CD4-positive, alpha-beta memory T cell (primary cell): ENCODE measurements at regions of chr22 and their contacts with region 1.

Region 1: GRCh38 chr22:40024201-40025061 is 29.7 kb downstream of the FAM83F start:
- DNase-seq: peak in 4 of 5 donors; percentile 41 to 48 (median 47)
- H3K4me3 ChIP-seq: no peak overlapping the region
- H3K4me3 Mint-ChIP-seq: no peak overlapping the region
- H3K27ac ChIP-seq: no peak overlapping the region
- H3K27ac Mint-ChIP-seq: no peak overlapping the region
- H3K4me1 ChIP-seq: no peaks in the 10 kb centered on the region
- H3K4me1 Mint-ChIP-seq: peaks cover 0 to 2% (median 0%) of the 10 kb centered on the region in 4 donors
- H3K27me3 ChIP-seq: no peaks in the 10 kb centered on the region
- H3K27me3 Mint-ChIP-seq: peaks cover 0 to 1% of the 10 kb centered on the region in 2 donors

Region 2: GRCh38 chr22:39543095-39543494 is 481.3 kb before region 1 on chr22:
- CTCF ChIA-PET with region 1: interaction called, 179 read pairs
- POLR2A ChIA-PET with region 1: no interaction called
- intact Hi-C with region 1: no loop called
- DNase-seq: no peak
- H3K4me3 ChIP-seq: no peak overlapping the region
- H3K4me3 Mint-ChIP-seq: no peak overlapping the region
- H3K27ac ChIP-seq: no peak overlapping the region
- H3K27ac Mint-ChIP-seq: no peak overlapping the region
- H3K4me1 ChIP-seq: peaks cover 7% of the 10 kb centered on the region
- H3K4me1 Mint-ChIP-seq: peaks cover 8 to 18% (median 15%) of the 10 kb centered on the region in 4 donors
- H3K27me3 ChIP-seq: peaks cover 3% of the 10 kb centered on the region
- H3K27me3 Mint-ChIP-seq: peaks cover 18 to 25% of the 10 kb centered on the region in 2 donors

Region 3: DNA sequence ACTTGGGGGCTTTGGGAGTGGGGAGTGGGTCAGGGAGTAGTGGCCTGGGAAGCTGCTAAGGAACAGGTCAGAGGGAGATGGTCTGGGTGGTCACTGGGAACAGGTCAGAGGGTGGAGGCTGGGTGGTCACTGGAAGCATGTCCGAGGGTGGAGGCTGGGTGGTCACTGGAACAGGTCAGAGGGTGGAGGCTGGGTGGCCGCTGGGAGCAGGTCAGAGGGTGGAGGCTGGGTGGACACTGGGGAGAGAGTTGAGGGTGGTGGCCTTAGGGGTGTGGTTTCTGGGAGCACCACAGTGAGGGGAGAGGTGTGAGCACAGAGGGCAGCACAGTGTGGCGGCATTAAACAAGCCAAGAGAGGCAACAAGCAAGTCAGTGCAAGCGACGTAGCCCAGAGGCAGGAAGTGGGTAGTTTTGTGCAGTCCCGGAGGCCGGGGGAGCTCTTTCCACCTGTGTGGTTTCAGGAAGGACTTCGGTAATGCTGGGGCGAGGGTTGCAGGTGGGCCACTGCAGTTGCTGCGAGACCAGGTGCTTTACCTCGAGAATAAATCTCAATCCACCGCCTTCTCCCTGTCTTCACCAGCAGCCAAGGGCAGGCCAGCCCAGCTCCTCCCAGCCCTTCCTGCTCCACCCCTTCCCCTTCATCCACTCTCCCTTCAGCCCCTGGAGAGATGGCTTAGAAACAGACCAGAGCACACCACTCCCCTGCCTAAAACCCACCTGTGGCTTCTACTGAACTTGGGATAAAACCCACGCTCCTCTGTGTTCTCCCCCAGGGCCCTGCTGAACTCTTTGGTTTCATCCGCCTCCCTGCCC is 457.1 kb before region 1 on chr22:
- CTCF ChIA-PET with region 1: interaction called, 11 read pairs
- POLR2A ChIA-PET with region 1: interaction called, 3 read pairs
- intact Hi-C with region 1: no loop called
- DNase-seq: peak; percentile 43 to 58 (median 52)
- H3K4me3 ChIP-seq: peak overlapping the region in 1 of 2 donors; percentile 3
- H3K4me3 Mint-ChIP-seq: peak overlapping the region; percentile 47 to 68 (median 50)
- H3K27ac ChIP-seq: no peak overlapping the region
- H3K27ac Mint-ChIP-seq: peak overlapping the region; percentile 54 to 91 (median 83)
- H3K4me1 ChIP-seq: peaks cover 14% of the 10 kb centered on the region
- H3K4me1 Mint-ChIP-seq: peaks cover 16 to 23% (median 18%) of the 10 kb centered on the region in 4 donors
- H3K27me3 ChIP-seq: no peaks in the 10 kb centered on the region
- H3K27me3 Mint-ChIP-seq: no peaks in the 10 kb centered on the region

Region 4: GRCh38 chr22:39900306-39901227 is 123.9 kb before region 1 on chr22 and contains the start of gene GRAP2:
- CTCF ChIA-PET with region 1: interaction called, 31 read pairs
- POLR2A ChIA-PET with region 1: no interaction called
- intact Hi-C with region 1: loop called (anchors 1 kb)
- DNase-seq: peak; percentile 84 to 91 (median 86)
- H3K4me3 ChIP-seq: peak within 1 kb of the TSS; percentile 57 to 72
- H3K4me3 Mint-ChIP-seq: peak within 1 kb of the TSS; percentile 91 to 100 (median 97)
- H3K27ac ChIP-seq: peak within 1 kb of the TSS; percentile 75
- H3K27ac Mint-ChIP-seq: peak within 1 kb of the TSS in 6 of 7 donors; percentile 95 to 98 (median 98)
- H3K4me1 ChIP-seq: peaks cover 29% of the 10 kb centered on the region
- H3K4me1 Mint-ChIP-seq: peaks cover 9 to 31% (median 17%) of the 10 kb centered on the region in 4 donors
- H3K27me3 ChIP-seq: no peaks in the 10 kb centered on the region
- H3K27me3 Mint-ChIP-seq: no peaks in the 10 kb centered on the region
- total RNA-seq, gene GRAP2: 134 to 140 TPM

Region 5: DNA sequence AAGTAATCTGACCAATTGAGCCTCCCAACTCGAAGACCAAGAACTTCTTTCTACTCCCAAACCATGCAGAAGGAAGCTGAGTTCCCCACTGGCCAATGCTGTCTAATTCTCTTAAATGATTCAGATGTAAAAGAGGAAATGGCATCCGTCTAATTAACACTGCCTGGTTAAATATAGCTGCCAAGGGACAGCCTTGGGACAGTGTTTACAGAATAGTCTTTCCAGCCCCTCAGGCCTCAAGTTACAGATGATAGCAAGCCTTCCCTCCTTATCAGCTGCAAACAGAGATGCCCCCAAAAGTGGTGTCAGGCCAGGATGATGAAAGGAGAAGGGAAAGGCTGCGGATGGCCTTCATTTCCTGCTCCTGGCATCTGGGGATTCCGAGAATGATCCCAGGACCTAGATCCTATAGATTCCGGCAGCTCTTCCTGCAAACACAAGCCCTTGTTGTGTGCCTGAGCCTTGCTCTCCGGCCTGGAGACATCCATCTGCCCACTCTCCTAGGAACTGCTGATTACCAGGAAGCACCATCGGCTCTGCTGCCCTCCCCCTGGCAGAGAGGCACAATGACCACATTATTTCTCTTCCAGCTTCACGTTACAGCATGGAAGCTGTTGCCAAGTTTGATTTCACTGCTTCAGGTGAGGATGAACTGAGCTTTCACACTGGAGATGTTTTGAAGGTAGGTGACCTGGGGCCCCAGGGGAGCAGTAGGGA is 77.8 kb before region 1 on chr22:
- CTCF ChIA-PET with region 1: interaction called, 19 read pairs
- POLR2A ChIA-PET with region 1: no interaction called
- intact Hi-C with region 1: loop called (anchors 10 kb)
- DNase-seq: no peak
- H3K4me3 ChIP-seq: no peak overlapping the region
- H3K4me3 Mint-ChIP-seq: peak overlapping the region; percentile 29 to 62 (median 43)
- H3K27ac ChIP-seq: peak overlapping the region; percentile 6
- H3K27ac Mint-ChIP-seq: peak overlapping the region in 6 of 7 donors; percentile 60 to 94 (median 86)
- H3K4me1 ChIP-seq: peaks cover 100% of the 10 kb centered on the region
- H3K4me1 Mint-ChIP-seq: peaks cover 76 to 100% (median 90%) of the 10 kb centered on the region in 4 donors
- H3K27me3 ChIP-seq: no peaks in the 10 kb centered on the region
- H3K27me3 Mint-ChIP-seq: no peaks in the 10 kb centered on the region

Region 6: GRCh38 chr22:39980596-39980995 is 43.8 kb before region 1 on chr22:
- CTCF ChIA-PET with region 1: no interaction called
- POLR2A ChIA-PET with region 1: no interaction called
- intact Hi-C with region 1: no loop called
- DNase-seq: no peak
- H3K4me3 ChIP-seq: no peak overlapping the region
- H3K4me3 Mint-ChIP-seq: no peak overlapping the region
- H3K27ac ChIP-seq: no peak overlapping the region
- H3K27ac Mint-ChIP-seq: peak overlapping the region in 3 of 7 donors; percentile 68 to 81 (median 79)
- H3K4me1 ChIP-seq: peaks cover 8% of the 10 kb centered on the region
- H3K4me1 Mint-ChIP-seq: peaks cover 18 to 28% (median 21%) of the 10 kb centered on the region in 4 donors
- H3K27me3 ChIP-seq: no peaks in the 10 kb centered on the region
- H3K27me3 Mint-ChIP-seq: no peaks in the 10 kb centered on the region

Region 7: DNA sequence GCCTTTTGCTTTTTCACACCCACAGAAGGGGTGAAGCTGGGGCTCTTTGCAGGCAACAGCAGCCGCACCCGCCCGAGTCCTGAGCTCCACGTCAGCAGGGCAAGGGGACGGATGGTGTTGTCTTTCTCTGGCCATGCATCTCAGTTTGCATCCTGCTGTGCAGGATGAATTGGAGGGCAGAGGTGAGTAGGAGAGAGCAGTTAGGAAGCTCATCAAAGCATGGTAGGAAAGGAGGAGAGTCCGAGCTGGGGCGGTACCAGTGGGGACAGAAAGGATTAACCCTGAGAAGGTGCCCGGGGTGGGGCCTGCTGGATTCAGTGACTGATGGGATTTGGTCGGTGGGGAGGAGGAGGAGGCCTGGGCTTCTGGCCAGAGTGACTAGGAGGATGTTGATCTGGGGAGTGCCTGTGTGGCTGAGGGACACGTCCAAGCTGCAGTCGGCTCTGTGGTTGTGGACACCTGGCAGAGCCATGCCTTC is 15.1 kb before region 1 on chr22:
- CTCF ChIA-PET with region 1: interaction called, 17 read pairs
- POLR2A ChIA-PET with region 1: no interaction called
- intact Hi-C with region 1: no loop called
- DNase-seq: no peak
- H3K4me3 ChIP-seq: no peak overlapping the region
- H3K4me3 Mint-ChIP-seq: peak overlapping the region in 2 of 8 donors; percentile 23 to 62
- H3K27ac ChIP-seq: no peak overlapping the region
- H3K27ac Mint-ChIP-seq: peak overlapping the region in 1 of 7 donors; percentile 36
- H3K4me1 ChIP-seq: peaks cover 10% of the 10 kb centered on the region
- H3K4me1 Mint-ChIP-seq: peaks cover 2 to 13% (median 12%) of the 10 kb centered on the region in 4 donors
- H3K27me3 ChIP-seq: peaks cover 5% of the 10 kb centered on the region
- H3K27me3 Mint-ChIP-seq: peaks cover 9 to 34% of the 10 kb centered on the region in 2 donors

Region 8: GRCh38 chr22:40044102-40044869 is 19.9 kb after region 1 on chr22:
- CTCF ChIA-PET with region 1: interaction called, 15 read pairs
- POLR2A ChIA-PET with region 1: interaction called, 8 read pairs
- intact Hi-C with region 1: no loop called
- DNase-seq: peak; percentile 99 to 100 (median 99)
- H3K4me3 ChIP-seq: peak overlapping the region; percentile 60 to 67
- H3K4me3 Mint-ChIP-seq: peak overlapping the region; percentile 95 to 100 (median 98)
- H3K27ac ChIP-seq: peak overlapping the region; percentile 88
- H3K27ac Mint-ChIP-seq: peak overlapping the region; percentile 99 to 100 (median 100)
- H3K4me1 ChIP-seq: peaks cover 32% of the 10 kb centered on the region
- H3K4me1 Mint-ChIP-seq: peaks cover 22 to 47% (median 36%) of the 10 kb centered on the region in 4 donors
- H3K27me3 ChIP-seq: no peaks in the 10 kb centered on the region
- H3K27me3 Mint-ChIP-seq: peaks cover 4 to 10% of the 10 kb centered on the region in 2 donors

Region 9: DNA sequence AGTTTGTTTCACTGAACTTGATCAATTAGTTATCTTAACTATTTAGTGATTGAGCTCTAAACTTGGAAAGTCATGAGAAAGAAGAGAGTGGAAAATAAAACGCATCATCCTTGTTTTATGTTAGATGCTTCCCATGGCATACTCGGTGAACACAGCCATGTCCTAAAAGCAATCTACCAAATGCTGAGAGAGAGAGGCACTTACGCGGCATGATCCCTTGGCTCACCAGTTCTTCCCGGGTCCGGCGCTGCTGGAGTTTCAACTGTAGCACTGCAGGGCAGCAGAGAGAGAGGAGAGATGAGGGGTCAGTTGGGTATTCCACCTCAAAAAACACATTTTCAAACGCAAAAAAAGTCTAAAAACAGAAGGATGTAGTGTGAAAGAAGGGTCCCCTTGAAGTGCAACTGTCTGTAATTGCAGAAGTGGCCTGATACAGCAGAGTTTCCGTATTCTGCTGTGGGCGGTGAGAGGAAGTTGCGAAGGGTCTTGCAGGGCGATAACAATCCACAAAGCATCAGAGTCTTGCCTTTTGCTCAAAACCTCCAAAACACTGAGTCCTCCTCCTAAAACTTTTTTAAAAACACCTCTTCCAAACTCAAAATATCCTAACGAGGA is 438.7 kb after region 1 on chr22:
- CTCF ChIA-PET with region 1: no interaction called
- POLR2A ChIA-PET with region 1: no interaction called
- intact Hi-C with region 1: no loop called
- DNase-seq: peak; percentile 36 to 58 (median 47)
- H3K4me3 ChIP-seq: peak overlapping the region; percentile 59 to 75
- H3K4me3 Mint-ChIP-seq: peak overlapping the region; percentile 78 to 99 (median 98)
- H3K27ac ChIP-seq: peak overlapping the region; percentile 64
- H3K27ac Mint-ChIP-seq: peak overlapping the region; percentile 89 to 95 (median 93)
- H3K4me1 ChIP-seq: peaks cover 57% of the 10 kb centered on the region
- H3K4me1 Mint-ChIP-seq: peaks cover 48 to 70% (median 61%) of the 10 kb centered on the region in 4 donors
- H3K27me3 ChIP-seq: no peaks in the 10 kb centered on the region
- H3K27me3 Mint-ChIP-seq: no peaks in the 10 kb centered on the region

Region 10: DNA sequence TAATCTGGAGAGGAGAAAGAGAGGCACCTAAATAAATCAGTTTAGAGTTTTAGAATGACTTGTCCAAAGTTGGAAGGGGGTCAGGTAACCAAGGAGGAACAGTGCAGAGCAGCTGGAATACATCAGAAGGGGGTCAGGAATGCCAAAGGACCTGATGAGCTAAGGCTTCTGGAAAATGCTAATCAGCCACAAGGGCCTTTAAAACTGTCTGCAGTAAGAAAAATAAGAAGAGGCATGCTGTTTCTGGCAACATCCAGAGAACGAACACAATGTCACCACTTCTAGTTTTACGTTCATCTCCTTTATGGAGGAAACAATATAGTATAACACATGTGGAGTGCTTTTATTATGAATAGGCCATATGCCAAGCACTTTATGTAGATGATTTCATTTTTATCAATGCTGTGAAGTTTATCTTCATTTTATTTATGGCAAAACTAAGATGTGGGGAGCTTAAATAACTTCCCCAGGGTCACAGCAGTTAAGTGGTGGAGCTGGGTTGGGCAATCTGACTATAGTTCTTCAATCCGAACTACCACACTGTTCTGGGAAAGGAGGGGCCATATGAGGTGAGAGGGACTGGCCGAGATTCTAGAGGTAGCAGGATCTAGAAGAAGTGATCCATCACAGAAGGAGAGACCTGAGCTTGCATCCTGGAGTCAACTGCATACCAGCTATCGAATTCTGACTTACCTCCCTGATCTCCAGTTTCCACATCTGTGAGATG is 1467.1 kb after region 1 on chr22:
- CTCF ChIA-PET with region 1: no interaction called
- POLR2A ChIA-PET with region 1: no interaction called
- intact Hi-C with region 1: no loop called
- DNase-seq: no peak
- H3K4me3 ChIP-seq: no peak overlapping the region
- H3K4me3 Mint-ChIP-seq: no peak overlapping the region
- H3K27ac ChIP-seq: no peak overlapping the region
- H3K27ac Mint-ChIP-seq: peak overlapping the region in 4 of 7 donors; percentile 35 to 84 (median 52)
- H3K4me1 ChIP-seq: no peaks in the 10 kb centered on the region
- H3K4me1 Mint-ChIP-seq: peaks cover 16 to 35% (median 24%) of the 10 kb centered on the region in 4 donors
- H3K27me3 ChIP-seq: no peaks in the 10 kb centered on the region
- H3K27me3 Mint-ChIP-seq: no peaks in the 10 kb centered on the region